ENCODE measurements at regions of chr1 and their contacts with region 1.

Region 1: GRCh38 chr1:167650269-167651160 is 20.5 kb downstream of the RCSD1 start:
- DNase-seq: peak; percentile 44
- CTCF ChIP-seq: no peak

Region 2: DNA sequence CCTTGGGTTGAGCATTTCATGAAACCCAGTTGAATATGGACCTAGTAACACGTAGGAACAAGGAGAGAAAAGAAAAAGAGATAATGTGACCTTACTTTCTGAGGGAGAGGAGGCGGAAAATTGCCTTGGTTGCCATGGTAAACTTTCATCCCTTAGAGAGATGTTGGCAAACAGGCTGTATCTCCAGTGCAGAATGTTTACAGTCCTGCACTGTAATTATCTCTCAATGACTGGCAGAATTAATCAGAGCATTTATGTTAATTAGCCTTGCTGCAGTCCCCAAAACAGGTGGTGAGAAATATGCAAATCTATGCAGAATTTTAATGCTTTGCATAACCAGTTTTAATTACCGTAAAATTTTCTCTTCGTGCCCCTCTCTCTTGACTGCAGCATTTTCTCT is 279.5 kb before region 1 on chr1:
- CTCF ChIA-PET with region 1: no interaction called
- POLR2A ChIA-PET with region 1: no interaction called
- DNase-seq: no peak
- CTCF ChIP-seq: no peak

Region 3: GRCh38 chr1:167635156-167635648 is 15.3 kb before region 1 on chr1:
- CTCF ChIA-PET with region 1: interaction called, 50 read pairs
- POLR2A ChIA-PET with region 1: interaction called, 6 read pairs
- DNase-seq: no peak
- CTCF ChIP-seq: no peak